ENCODE measurements at regions of chr9 and their contacts with region 1.

Region 1: GRCh38 chr9:97411789-97412625 is at the start of gene TDRD7:
- DNase-seq: peak; percentile 87
- H3K4me3 Mint-ChIP-seq: peak within 1 kb of the TSS; percentile 84
- H3K27ac Mint-ChIP-seq: peak within 1 kb of the TSS; percentile 61
- H3K4me1 Mint-ChIP-seq: peaks cover 35% of the 10 kb centered on the region
- H3K27me3 Mint-ChIP-seq: peaks cover 34% of the 10 kb centered on the region
- total RNA-seq, gene TDRD7: 4.7 TPM in 2 replicates

Region 2: DNA sequence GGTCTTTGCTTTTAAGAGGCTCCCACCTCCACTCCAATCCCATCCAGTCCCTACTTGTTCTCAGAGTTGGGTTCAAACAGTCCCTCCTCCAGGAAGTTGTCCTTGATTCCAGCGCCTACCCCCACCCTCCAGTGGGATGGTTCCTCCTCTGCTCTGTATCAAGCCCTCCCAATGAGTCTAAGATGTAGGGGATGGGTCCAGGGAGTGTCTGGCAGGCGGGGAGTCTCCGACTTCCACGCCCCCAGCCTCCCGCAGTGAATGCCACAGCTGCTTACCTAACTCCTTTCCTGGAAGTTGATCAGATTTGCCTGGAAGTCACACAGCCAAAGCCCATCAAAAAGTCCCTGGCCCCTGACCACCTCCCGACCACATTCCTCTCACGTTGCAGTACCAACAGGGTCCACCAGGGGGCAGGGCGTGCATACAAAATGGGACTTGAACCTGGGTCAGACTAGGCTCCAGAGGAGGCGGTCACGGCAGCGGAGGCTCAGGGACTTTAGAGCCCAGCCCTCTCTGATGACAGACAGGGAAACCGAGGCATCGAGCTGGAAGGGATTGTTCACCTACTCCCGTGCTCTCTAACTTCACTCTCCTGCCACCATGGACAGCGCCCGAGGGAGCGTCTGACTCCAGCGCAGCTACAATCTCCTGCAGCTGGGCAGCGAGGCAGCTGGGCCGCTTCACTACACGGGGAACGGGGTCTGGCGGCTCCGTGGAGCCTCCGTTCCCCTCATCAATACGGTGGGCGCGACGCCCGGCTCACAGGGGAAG is 25.1 kb before region 1 on chr9:
- intact Hi-C with region 1: loop called (anchors 1 kb)
- DNase-seq: peak; percentile 63
- H3K4me3 Mint-ChIP-seq: no peak overlapping the region
- H3K27ac Mint-ChIP-seq: no peak overlapping the region
- H3K4me1 Mint-ChIP-seq: peaks cover 41% of the 10 kb centered on the region
- H3K27me3 Mint-ChIP-seq: peaks cover 33% of the 10 kb centered on the region

Region 3: GRCh38 chr9:97501177-97501971 is 89.4 kb after region 1 on chr9 and contains the start of gene TMOD1:
- intact Hi-C with region 1: loop called (anchors 2 kb)
- DNase-seq: peak; percentile 28
- H3K4me3 Mint-ChIP-seq: peak within 1 kb of the TSS; percentile 78
- H3K27ac Mint-ChIP-seq: peak within 1 kb of the TSS; percentile 31
- H3K4me1 Mint-ChIP-seq: peaks cover 25% of the 10 kb centered on the region
- H3K27me3 Mint-ChIP-seq: peaks cover 52% of the 10 kb centered on the region
- total RNA-seq, gene TMOD1: 0.81 and 0.86 TPM in 2 replicates

Measured in activated T-helper 1 cell treated with anti-CD3 and anti-CD28 coated beads, Interleukin-12 subunit alpha, Interleukin-12 subunit beta, Interleukin-2, Interleukin-4 antibody, amounts not matched to agents 30 ng/mL and 10 ng/mL and 1 ng/mL, durations not matched to agents 14 hours and 24 hours and 36 hours (primary cell).